Activated T-helper 1 cell treated with anti-CD3 and anti-CD28 coated beads, Interleukin-12 subunit alpha, Interleukin-12 subunit beta, Interleukin-2, Interleukin-4 antibody, amounts not matched to agents 30 ng/mL and 10 ng/mL and 1 ng/mL, durations not matched to agents 14 hours and 24 hours and 36 hours (primary cell): ENCODE measurements at regions of chr3 and their contacts with region 1.

Region 1: DNA sequence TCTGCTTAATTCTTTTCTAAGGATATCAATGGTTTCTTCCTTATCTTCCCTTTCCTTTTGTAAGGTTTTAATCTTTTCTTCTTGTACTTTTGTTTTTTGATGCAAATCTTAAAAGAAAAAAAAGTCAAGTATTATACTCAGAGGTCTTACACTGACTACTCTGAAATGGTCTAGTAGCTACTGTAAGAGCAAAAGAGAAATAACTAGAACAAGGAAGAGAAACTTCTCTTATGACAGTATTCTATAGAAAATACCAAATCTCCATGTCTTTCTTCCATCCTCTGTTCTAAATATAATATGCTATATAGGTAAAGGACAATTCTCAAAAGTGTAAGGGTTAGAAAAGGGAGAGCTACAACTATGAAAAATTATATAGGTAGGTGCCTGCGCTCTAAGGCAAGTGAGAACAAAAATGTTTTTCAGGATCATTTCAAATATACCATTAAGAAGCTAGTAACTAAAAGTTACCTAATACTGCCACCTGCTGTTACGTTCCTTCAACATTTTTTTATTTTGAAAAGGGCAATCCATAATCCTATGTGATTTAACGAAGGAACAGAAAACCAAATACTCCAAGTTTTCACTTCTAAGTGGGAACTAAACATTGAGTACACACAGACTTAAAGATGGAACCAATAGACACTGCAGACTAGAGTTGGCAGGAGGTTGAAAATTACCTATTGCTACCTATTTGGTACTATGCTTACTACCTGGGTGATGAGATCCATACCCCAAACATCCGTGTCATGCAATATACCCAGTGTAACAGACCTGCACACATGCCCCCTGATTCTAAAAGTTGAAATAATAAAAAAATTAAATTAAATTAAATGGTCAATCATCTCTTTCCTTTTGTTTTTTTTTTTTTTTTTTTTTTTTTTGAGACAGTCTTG is 36.7 kb downstream of the CIP2A start:
- DNase-seq: no peak
- H3K4me3 Mint-ChIP-seq: no peak overlapping the region
- H3K27ac Mint-ChIP-seq: no peak overlapping the region
- H3K4me1 Mint-ChIP-seq: peaks cover 6% of the 10 kb centered on the region
- H3K27me3 Mint-ChIP-seq: no peaks in the 10 kb centered on the region

Region 2: DNA sequence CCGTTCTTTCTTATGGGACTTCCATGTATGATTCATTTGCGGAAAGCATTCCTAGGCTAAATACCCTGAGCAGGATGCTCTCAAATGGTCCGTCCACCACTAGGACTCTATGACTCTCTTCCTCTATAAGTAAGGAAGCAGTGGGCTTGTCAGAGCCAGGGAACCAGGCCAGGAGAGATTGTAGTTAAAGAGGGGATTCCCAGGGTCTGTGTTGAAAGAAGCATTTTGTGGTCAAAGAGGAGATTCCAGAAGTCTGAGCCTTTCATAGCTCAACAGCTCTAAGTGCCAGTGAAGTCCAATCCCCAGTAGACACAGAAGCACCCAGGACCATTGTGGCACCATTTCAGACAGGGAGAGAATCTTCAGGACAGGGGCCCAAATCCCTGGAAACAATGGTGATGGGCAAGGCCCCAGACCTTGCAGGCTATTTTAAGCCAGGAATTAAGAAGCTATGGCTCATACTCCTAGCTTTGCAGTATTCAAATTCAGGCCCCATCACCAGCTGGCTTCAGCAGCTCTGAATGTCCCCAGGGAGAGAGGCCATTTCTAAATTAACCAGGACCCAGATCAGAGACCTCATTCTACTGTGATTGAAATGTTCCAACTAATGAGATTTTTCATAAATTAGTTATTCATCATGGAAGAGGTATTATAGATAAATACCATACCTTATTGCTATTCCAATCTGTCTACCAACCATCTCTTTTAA is 543.4 kb before region 1 on chr3:
- intact Hi-C with region 1: no loop called
- DNase-seq: no peak
- H3K4me3 Mint-ChIP-seq: no peak overlapping the region
- H3K27ac Mint-ChIP-seq: no peak overlapping the region
- H3K4me1 Mint-ChIP-seq: no peaks in the 10 kb centered on the region
- H3K27me3 Mint-ChIP-seq: peaks cover 10% of the 10 kb centered on the region

Region 3: DNA sequence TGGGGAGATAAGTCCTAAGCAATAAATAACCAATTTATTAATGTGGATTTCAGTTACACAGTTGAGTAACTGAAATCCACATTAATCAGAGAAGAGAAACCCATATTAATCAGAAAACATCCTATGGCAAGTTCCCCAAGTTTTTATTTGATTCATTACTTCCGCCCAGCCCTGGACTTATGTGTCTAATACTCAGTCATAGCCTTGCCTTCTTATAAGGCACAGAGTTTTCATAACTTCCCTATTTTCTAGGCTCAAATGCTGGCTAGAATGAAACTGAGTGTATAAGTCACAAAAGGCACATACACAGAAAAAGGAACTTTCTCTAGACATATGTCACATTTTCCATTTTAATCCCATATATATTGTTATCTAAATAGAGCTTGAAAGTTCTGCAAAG is 490.5 kb before region 1 on chr3:
- intact Hi-C with region 1: loop called (anchors 5 kb)
- DNase-seq: no peak
- H3K4me3 Mint-ChIP-seq: no peak overlapping the region
- H3K27ac Mint-ChIP-seq: no peak overlapping the region
- H3K4me1 Mint-ChIP-seq: peaks cover 46% of the 10 kb centered on the region
- H3K27me3 Mint-ChIP-seq: no peaks in the 10 kb centered on the region

Region 4: DNA sequence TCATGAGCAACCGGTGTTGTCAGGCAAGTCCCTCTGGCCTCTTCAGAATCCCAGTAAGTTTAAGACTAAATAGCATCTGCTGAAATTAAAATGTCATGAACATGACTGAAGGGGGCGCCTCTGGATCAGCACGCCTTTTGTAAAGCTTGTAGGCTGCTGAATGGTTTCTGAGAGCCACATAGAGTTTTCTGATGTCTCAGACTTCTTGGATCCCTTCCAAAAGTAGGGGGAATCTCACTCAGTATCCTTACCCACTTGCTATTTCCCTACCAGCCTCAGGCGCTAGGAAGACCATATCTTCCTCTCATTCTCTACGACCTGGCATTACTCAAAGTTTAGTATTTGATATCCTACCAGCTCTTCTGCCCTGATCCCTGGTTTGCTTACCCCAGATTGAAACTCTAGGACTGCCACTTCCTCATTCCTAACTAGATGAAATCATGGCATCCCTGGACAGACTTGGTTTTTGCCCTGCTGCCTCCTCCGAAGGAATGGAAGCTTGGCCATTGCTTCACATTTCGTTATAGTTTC is 399.0 kb before region 1 on chr3:
- intact Hi-C with region 1: loop called (anchors 5 kb)
- DNase-seq: peak; percentile 35
- H3K4me3 Mint-ChIP-seq: no peak overlapping the region
- H3K27ac Mint-ChIP-seq: no peak overlapping the region
- H3K4me1 Mint-ChIP-seq: peaks cover 20% of the 10 kb centered on the region
- H3K27me3 Mint-ChIP-seq: no peaks in the 10 kb centered on the region

Region 5: DNA sequence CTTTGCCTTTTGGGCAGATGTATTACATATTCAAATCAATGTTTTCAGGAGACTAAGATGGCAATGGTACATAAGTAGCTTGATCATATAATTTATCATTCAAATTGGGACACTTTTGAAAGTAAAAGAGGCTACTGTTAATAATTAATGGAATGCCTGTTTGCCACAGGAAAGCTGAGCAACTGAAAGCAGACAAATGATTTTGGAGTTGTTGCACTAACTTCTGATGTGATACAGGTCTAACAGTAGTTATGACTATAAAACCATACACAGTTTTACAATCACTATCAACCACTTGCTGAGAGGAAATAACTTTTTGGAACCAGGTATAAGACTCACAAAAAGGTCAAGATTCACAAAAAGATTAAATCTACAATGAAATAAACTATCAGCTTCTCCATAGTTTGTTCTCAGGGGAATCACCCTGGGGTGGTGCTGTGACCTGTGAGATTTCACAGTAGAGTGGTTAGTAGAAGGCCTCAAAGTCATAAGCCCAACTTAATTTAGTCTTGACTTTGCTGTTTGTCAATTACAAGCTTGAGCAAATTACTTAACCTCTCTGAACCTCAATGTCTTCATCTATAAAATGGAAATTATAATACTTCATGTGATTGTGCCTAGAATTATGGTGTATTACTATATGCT is 213.5 kb before region 1 on chr3:
- intact Hi-C with region 1: no loop called
- DNase-seq: no peak
- H3K4me3 Mint-ChIP-seq: no peak overlapping the region
- H3K27ac Mint-ChIP-seq: no peak overlapping the region
- H3K4me1 Mint-ChIP-seq: peaks cover 21% of the 10 kb centered on the region
- H3K27me3 Mint-ChIP-seq: no peaks in the 10 kb centered on the region

Region 6: DNA sequence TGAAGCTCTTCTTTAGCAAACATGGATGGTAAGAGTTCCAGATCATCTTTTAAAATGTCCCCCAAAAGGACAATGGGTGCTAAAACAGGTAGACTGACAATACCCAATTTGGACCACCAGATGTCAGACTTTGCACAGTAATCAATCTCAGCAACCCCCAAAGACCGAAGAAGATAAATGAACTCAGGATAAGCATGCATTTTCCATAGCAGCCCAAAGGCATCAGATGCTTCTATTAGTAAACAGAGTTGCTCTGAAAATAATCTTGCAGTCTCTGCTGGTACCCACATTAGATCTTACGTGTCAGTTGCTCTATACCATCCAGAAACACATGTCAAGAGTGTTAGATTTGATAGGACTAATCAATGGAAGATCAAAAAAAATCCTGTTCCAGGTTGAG is 62.7 kb before region 1 on chr3:
- intact Hi-C with region 1: loop called (anchors 1 kb)
- DNase-seq: no peak
- H3K4me3 Mint-ChIP-seq: no peak overlapping the region
- H3K27ac Mint-ChIP-seq: no peak overlapping the region
- H3K4me1 Mint-ChIP-seq: peaks cover 4% of the 10 kb centered on the region
- H3K27me3 Mint-ChIP-seq: peaks cover 5% of the 10 kb centered on the region

Region 7: DNA sequence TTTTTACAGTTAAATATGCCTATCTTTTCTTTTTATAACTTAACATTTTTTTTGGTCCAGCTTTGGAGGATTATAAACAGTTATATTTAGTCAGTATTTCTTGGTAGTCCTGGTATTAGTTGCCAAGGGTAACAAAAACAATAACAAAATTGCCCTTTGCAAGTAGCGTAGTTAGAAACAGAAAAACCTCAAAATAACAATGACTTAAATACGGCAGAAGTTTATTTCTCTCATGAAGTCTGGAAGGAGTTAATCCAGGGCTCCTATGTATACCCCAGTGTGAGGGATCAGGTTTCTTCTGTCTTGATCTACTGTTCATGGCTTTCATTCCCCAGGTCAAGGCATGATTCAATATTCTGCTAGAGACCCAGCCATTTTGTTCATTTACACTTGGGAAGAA is 28.0 kb before region 1 on chr3:
- intact Hi-C with region 1: no loop called
- DNase-seq: no peak
- H3K4me3 Mint-ChIP-seq: no peak overlapping the region
- H3K27ac Mint-ChIP-seq: no peak overlapping the region
- H3K4me1 Mint-ChIP-seq: no peaks in the 10 kb centered on the region
- H3K27me3 Mint-ChIP-seq: peaks cover 12% of the 10 kb centered on the region

Region 8: DNA sequence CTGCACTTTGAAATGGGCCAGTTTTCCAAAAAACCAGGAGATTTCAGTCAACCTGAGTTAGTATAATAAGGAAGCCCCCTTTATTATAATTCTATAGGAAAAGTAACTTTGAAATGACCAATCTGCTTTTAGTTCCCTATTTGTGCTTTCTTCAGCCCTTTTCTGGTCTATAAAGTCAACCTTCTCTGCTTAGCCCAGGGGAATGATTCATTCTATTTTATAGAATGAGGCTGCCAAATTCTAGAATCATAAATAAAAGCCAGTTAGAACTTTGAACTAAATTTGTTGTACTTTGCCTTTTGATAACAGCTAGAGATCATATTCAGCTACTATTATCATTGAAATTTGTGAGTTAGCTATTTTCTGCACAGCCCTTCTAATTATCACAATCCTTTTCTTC is 12.1 kb after region 1 on chr3:
- intact Hi-C with region 1: loop called (anchors 2 kb)
- DNase-seq: no peak
- H3K4me3 Mint-ChIP-seq: no peak overlapping the region
- H3K27ac Mint-ChIP-seq: peak overlapping the region; percentile 9
- H3K4me1 Mint-ChIP-seq: peaks cover 20% of the 10 kb centered on the region
- H3K27me3 Mint-ChIP-seq: no peaks in the 10 kb centered on the region